ENCODE measurements at regions of chr18 and their contacts with region 1.

Region 1: DNA sequence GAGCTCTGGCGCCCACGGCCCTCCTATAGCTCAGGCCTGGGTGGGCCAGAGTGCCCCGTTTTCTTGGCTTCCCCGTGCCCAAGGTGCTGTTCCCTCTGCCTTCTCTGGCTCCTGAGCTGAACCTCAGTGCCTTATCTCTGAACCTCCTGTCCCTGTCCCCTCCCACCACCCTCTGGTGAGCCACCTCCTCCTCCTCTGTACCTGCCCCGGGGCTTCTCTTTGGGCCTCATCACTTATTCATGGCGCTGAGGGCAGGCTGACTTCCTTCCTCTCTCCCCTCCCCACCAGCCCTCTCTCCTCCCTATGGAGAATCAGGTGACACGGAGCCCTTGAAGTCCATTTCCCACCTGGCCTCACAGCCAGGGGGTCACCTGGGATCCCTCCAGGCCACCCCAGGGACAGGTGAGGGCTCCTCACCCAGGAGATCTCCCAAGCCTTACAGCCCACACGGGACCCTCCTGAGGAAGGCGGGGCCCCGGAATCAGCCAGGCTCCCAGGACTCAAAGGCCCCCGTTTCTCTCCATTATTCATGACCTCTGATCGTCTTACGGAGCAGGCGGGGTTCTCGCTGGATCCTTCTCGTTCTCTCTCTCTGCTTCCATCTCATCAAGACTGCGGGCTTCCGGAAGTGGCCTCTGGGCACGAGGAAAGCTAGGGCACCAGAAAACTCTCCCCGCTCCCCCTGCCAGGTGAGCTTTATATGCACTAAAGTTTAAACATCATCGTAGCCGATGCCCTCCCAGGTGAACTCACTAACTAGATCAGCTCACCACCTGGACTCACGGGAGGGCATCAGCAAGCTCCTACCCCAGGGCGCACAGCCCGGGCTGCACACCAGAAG is at the start of gene LOXHD1:
- DNase-seq: no peak
- H3K4me3 ChIP-seq: no peak within 1 kb of the TSS
- H3K27ac ChIP-seq: no peak within 1 kb of the TSS
- H3K4me1 ChIP-seq: no peaks in the 10 kb centered on the region
- H3K27me3 ChIP-seq: peaks cover 17% of the 10 kb centered on the region
- total RNA-seq, gene LOXHD1: not detected in 2 replicates

Region 2: DNA sequence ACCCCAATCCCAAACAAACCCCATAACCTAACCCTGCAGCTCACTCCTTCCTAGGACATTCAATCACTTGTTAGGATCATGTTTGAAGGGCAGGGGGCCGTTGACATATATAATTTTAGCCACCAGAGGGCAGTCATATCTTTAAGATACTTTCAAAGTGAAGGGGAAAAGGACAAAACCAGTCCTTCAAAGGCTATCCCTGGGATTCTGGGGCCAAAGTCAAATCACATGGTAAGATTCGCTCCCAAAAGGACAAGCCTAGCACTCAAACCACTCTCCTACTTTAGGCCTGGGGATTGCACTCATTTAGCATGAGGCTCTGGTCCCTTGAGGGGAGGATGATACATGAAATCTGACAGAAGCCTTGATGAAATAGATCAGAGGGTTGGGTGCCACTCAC is 508.5 kb before region 1 on chr18:
- in situ Hi-C with region 1: loop called (anchors 10 kb)
- DNase-seq: peak; percentile 71
- H3K4me3 ChIP-seq: no peak overlapping the region
- H3K27ac ChIP-seq: no peak overlapping the region
- H3K4me1 ChIP-seq: peaks cover 21% of the 10 kb centered on the region
- H3K27me3 ChIP-seq: no peaks in the 10 kb centered on the region

Region 3: DNA sequence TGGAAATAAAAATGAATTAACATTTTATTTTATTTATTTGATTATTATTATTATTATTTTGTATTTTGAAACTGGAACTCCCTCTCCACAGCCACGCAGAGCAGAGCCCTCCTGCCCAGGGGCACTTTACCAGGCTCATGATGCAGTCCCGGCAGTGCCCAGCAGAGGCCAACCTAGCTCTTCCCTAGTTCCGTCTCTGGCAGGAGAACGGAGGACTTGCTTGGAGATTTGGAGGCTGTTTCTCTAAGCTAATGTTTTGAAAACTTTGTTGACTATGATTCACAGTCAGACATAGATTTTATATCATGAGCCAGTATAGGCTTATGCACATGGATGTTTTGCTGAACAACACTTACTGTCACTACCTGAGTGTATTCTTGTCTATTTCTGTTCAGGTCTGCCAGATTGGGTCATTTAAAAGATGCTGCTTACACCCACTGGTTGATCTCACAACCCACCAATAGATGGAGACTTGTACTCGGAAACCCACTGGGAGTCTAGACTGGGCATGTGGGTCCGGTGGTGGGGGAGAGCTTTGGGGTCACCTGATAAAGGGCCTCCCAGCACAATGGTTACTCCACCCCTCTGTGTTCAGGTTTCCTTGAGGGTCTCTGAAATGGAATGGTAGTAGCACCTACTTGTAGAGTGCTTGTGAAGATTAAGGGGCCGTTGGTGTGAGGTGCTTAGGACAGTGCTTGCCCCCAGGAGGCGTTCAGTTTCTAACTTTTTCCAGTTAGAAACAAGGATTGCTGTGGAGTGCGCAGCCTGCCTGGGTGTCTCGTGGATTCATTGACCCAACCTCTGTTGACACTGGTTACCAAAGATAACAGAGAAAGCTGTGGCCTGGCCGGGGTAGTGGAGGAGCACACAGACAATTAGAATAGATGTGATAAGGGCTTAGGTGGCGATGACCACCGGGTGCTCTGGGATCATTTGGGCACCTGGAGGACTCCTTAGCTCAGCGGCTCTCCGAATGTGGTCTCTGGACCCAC is 375.9 kb before region 1 on chr18:
- in situ Hi-C with region 1: loop called (anchors 10 kb)
- DNase-seq: peak; percentile 89
- H3K4me3 ChIP-seq: no peak overlapping the region
- H3K27ac ChIP-seq: no peak overlapping the region
- H3K4me1 ChIP-seq: peaks cover 10% of the 10 kb centered on the region
- H3K27me3 ChIP-seq: no peaks in the 10 kb centered on the region